ENCODE measurements at regions of chr5 and their contacts with region 1.

Region 1: GRCh38 chr5:2017540-2018389 is 135.0 kb upstream of the IRX4 start:
- DNase-seq: peak in 7 of 14 experiments; percentile 6 to 54 (median 20)
- ATAC-seq: no peak
- H3K4me3 ChIP-seq: no peak overlapping the region
- H3K4me3 Mint-ChIP-seq: no peak overlapping the region
- H3K27ac ChIP-seq: no peak overlapping the region
- H3K27ac Mint-ChIP-seq: no peak overlapping the region
- H3K4me1 ChIP-seq: no peaks in the 10 kb centered on the region
- H3K4me1 Mint-ChIP-seq: no peaks in the 10 kb centered on the region
- H3K27me3 ChIP-seq: peaks cover 4 to 5% of the 10 kb centered on the region in 2 experiments
- H3K27me3 Mint-ChIP-seq: peaks cover 12% of the 10 kb centered on the region
- CTCF ChIP-seq: peak; percentile 38

Region 2: GRCh38 chr5:1666812-1667588 is 350.8 kb before region 1 on chr5:
- CTCF ChIA-PET with region 1: no interaction called
- POLR2A ChIA-PET with region 1: no interaction called
- intact Hi-C with region 1: loop called in 1 of 2 experiments (anchors 5 kb)
- DNase-seq: peak; percentile 26 to 64 (median 40)
- ATAC-seq: peak; percentile 70
- H3K4me3 ChIP-seq: no peak overlapping the region
- H3K4me3 Mint-ChIP-seq: peak overlapping the region; percentile 27
- H3K27ac ChIP-seq: no peak overlapping the region
- H3K27ac Mint-ChIP-seq: no peak overlapping the region
- H3K4me1 ChIP-seq: peaks cover 17% of the 10 kb centered on the region
- H3K4me1 Mint-ChIP-seq: peaks cover 18% of the 10 kb centered on the region
- H3K27me3 ChIP-seq: peaks cover 54 to 62% of the 10 kb centered on the region in 2 experiments
- H3K27me3 Mint-ChIP-seq: peaks cover 81% of the 10 kb centered on the region
- CTCF ChIP-seq: no peak

Region 3: DNA sequence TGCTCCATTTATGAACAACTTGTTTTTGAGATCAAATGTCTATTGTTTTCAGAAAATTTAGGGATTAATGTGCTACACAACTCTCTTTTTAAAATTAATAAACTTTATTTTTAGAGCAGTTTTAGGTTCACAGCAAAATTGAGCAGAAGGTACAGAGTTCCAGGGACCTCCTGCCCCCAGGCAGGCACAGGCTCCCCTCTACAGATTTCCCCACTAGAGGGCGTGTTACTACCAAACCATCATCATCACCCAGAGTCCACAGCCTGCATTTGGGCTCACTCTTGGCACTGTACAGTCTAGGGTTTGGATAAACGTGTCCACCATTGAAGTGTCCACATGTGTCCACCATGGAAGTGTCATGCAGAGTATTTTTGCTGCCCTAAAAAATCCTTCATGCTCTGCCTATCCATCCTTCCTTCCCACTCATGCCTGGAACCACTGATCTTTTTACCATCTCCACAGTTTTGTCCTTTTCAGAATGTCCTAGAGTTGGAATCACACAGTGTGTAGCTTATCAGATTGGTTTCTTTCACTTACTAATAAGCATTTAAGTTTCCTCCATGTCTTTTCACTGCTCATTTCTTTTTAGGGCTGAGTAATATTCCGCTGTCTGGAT is 279.9 kb before region 1 on chr5:
- CTCF ChIA-PET with region 1: no interaction called
- POLR2A ChIA-PET with region 1: no interaction called
- intact Hi-C with region 1: loop called (anchors 2 to 5 kb)
- DNase-seq: peak in 12 of 14 experiments; percentile 14 to 69 (median 32)
- ATAC-seq: peak; percentile 59
- H3K4me3 ChIP-seq: no peak overlapping the region
- H3K4me3 Mint-ChIP-seq: no peak overlapping the region
- H3K27ac ChIP-seq: no peak overlapping the region
- H3K27ac Mint-ChIP-seq: no peak overlapping the region
- H3K4me1 ChIP-seq: no peaks in the 10 kb centered on the region
- H3K4me1 Mint-ChIP-seq: no peaks in the 10 kb centered on the region
- H3K27me3 ChIP-seq: peaks cover 2 to 6% of the 10 kb centered on the region in 2 experiments
- H3K27me3 Mint-ChIP-seq: peaks cover 31% of the 10 kb centered on the region
- CTCF ChIP-seq: peak; percentile 86

Region 4: GRCh38 chr5:1763548-1763911 is 254.2 kb before region 1 on chr5:
- CTCF ChIA-PET with region 1: no interaction called
- POLR2A ChIA-PET with region 1: no interaction called
- intact Hi-C with region 1: loop called (anchors 5 kb)
- DNase-seq: peak in 11 of 14 experiments; percentile 12 to 60 (median 33)
- ATAC-seq: peak; percentile 32
- H3K4me3 ChIP-seq: no peak overlapping the region
- H3K4me3 Mint-ChIP-seq: no peak overlapping the region
- H3K27ac ChIP-seq: no peak overlapping the region
- H3K27ac Mint-ChIP-seq: no peak overlapping the region
- H3K4me1 ChIP-seq: no peaks in the 10 kb centered on the region
- H3K4me1 Mint-ChIP-seq: no peaks in the 10 kb centered on the region
- H3K27me3 ChIP-seq: peaks cover 0 to 6% of the 10 kb centered on the region in 2 experiments
- H3K27me3 Mint-ChIP-seq: peaks cover 22% of the 10 kb centered on the region
- CTCF ChIP-seq: peak; percentile 69

Region 5: GRCh38 chr5:2048664-2049063 is 30.9 kb after region 1 on chr5:
- CTCF ChIA-PET with region 1: no interaction called
- POLR2A ChIA-PET with region 1: no interaction called
- intact Hi-C with region 1: no loop called
- DNase-seq: no peak
- ATAC-seq: no peak
- H3K4me3 ChIP-seq: no peak overlapping the region
- H3K4me3 Mint-ChIP-seq: no peak overlapping the region
- H3K27ac ChIP-seq: no peak overlapping the region
- H3K27ac Mint-ChIP-seq: no peak overlapping the region
- H3K4me1 ChIP-seq: no peaks in the 10 kb centered on the region
- H3K4me1 Mint-ChIP-seq: no peaks in the 10 kb centered on the region
- H3K27me3 ChIP-seq: no peaks in the 10 kb centered on the region
- H3K27me3 Mint-ChIP-seq: peaks cover 52% of the 10 kb centered on the region
- CTCF ChIP-seq: no peak

Region 6: GRCh38 chr5:2129568-2130272 is 112.0 kb after region 1 on chr5:
- CTCF ChIA-PET with region 1: no interaction called
- POLR2A ChIA-PET with region 1: no interaction called
- intact Hi-C with region 1: no loop called
- DNase-seq: no peak
- ATAC-seq: no peak
- H3K4me3 ChIP-seq: no peak overlapping the region
- H3K4me3 Mint-ChIP-seq: no peak overlapping the region
- H3K27ac ChIP-seq: no peak overlapping the region
- H3K27ac Mint-ChIP-seq: no peak overlapping the region
- H3K4me1 ChIP-seq: no peaks in the 10 kb centered on the region
- H3K4me1 Mint-ChIP-seq: no peaks in the 10 kb centered on the region
- H3K27me3 ChIP-seq: peaks cover 0 to 2% of the 10 kb centered on the region in 2 experiments
- H3K27me3 Mint-ChIP-seq: peaks cover 23% of the 10 kb centered on the region
- CTCF ChIP-seq: no peak